A673 (cell line): ENCODE measurements at regions of chr2 and their contacts with region 1.

Region 1: DNA sequence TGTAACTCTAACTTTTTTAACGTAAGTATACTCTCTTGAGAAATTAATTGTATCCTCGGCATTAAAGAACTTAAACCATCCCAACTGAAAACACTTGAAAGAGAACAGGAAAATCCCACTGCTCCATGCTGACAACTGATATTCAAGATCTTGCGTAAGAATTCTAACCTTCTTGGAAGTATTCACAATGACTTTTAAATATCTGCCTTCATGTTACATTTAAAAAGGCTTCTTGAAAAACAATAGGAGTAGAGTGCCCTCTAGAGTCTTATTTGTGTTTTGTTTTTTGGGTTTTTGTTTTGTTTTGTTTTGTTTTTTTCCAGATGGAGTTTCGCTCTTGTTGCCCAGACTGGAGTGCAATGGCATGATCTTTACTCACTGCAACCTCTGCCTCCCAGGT is 65.4 kb upstream of the DNAJC10 start:
- DNase-seq: peak; percentile 85
- H3K4me3 ChIP-seq: no peak overlapping the region
- H3K27ac ChIP-seq: no peak overlapping the region
- H3K4me1 ChIP-seq: peaks cover 17% of the 10 kb centered on the region
- H3K27me3 ChIP-seq: no peaks in the 10 kb centered on the region
- CTCF ChIP-seq: peak; percentile 60

Region 2: DNA sequence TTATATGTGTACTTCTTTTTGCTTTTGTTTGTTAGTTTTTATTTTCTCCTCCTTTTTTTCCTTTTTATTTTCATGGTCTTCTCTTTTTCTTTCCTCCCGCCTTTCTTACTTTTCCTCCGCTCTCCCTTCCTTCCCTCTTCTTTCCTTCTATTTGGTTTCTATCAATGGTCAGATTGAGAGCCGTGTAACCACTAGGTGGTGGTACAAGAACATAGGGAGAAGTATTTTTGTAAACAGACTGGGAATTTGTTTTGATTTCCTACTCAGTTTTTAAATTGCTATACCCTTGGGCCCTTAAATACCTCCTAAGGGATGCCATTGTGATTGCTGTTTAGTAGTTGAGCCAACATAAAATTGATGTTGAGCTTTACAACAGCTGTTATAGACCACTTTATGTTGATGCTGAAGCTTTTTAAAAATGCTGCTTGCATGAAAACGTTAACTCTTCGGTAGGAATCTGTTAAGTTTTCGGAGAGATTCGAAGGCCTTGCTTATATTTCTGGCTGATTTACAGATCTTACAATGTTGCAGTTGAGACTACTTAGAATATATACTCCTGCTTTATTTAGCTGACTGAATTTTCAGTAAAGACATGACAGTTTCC is 1546.1 kb before region 1 on chr2:
- CTCF ChIA-PET with region 1: no interaction called
- POLR2A ChIA-PET with region 1: no interaction called
- intact Hi-C with region 1: loop called (anchors 10 kb)
- DNase-seq: peak; percentile 73
- H3K4me3 ChIP-seq: no peak overlapping the region
- H3K27ac ChIP-seq: no peak overlapping the region
- H3K4me1 ChIP-seq: peaks cover 8% of the 10 kb centered on the region
- H3K27me3 ChIP-seq: no peaks in the 10 kb centered on the region
- CTCF ChIP-seq: peak; percentile 79

Region 3: GRCh38 chr2:181738074-181738473 is 912.6 kb before region 1 on chr2:
- CTCF ChIA-PET with region 1: no interaction called
- POLR2A ChIA-PET with region 1: no interaction called
- intact Hi-C with region 1: loop called (anchors 5 kb)
- DNase-seq: peak; percentile 54
- H3K4me3 ChIP-seq: no peak overlapping the region
- H3K27ac ChIP-seq: no peak overlapping the region
- H3K4me1 ChIP-seq: peaks cover 2% of the 10 kb centered on the region
- H3K27me3 ChIP-seq: no peaks in the 10 kb centered on the region
- CTCF ChIP-seq: peak; percentile 51

Region 4: DNA sequence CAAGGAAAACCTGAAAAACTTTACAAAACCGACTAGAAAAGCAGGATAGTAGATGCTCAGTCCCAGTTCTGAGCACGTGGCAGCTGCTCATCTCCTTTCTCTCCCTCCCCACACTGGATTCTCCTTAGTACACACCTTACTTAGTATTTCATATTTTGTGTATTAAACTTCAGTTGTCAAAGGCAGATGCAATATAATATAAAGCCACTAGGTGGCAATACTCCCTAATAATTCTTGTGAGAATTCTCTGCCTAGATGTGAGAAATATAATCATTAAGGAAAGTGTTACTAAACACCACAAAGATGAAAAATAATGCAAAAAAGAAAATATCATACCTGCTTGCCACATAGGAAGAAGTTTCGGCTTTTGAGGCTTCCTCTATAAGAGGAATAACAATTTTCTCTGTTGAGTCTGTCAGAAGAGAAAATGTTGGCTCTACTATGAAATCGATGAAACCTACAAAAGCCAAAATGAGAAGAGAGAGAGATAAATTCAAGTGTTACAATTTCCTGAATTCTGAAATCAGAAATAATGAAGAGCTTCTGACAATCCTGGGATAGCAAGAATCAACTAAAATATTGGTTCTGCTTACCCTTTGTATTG is 464.5 kb before region 1 on chr2:
- CTCF ChIA-PET with region 1: interaction called, 25 read pairs
- POLR2A ChIA-PET with region 1: no interaction called
- intact Hi-C with region 1: loop called (anchors 1 kb)
- DNase-seq: peak; percentile 80
- H3K4me3 ChIP-seq: no peak overlapping the region
- H3K27ac ChIP-seq: peak overlapping the region; percentile 40
- H3K4me1 ChIP-seq: peaks cover 23% of the 10 kb centered on the region
- H3K27me3 ChIP-seq: no peaks in the 10 kb centered on the region
- CTCF ChIP-seq: peak; percentile 84

Region 5: DNA sequence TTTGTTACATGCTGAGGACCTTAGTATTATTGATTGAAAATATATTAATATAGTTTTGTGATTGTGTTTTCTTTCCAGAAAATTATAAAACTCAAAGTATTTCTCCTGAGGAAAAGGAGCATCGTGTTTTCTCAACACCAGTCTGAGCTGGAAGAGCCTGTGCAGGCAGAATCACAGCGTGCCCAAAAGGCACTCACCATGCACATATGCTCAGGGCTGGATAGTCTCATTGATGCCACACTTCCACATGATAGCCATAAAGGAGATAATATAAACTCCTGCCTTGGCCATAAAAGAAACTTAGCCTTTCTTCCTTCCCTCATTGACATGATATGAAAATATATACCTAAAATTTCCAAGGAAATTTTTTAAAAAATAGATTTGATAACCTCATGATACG is 227.8 kb before region 1 on chr2:
- CTCF ChIA-PET with region 1: no interaction called
- POLR2A ChIA-PET with region 1: no interaction called
- intact Hi-C with region 1: no loop called
- DNase-seq: no peak
- H3K4me3 ChIP-seq: no peak overlapping the region
- H3K27ac ChIP-seq: no peak overlapping the region
- H3K4me1 ChIP-seq: peaks cover 8% of the 10 kb centered on the region
- H3K27me3 ChIP-seq: no peaks in the 10 kb centered on the region
- CTCF ChIP-seq: no peak

Region 6: DNA sequence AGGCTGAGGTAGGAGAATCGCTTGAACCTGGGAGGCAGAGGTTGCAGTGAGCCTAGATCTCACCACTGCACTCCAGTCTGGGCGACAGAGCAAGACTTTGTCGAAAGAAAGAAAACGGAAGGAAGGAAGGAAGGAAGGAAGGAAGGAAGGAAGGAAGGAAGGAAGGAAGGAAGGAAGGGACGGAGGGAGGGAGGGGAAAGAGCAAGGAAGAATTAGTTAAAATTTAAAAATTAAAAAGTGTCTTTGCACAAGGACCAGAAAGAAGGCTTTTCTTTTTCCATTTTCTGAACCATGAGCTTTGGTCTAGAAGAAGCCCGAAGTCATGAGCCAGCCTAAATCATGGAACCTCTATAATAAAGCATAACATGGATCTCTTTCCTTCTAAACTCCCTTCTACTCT is 72.9 kb before region 1 on chr2:
- CTCF ChIA-PET with region 1: interaction called, 23 read pairs
- POLR2A ChIA-PET with region 1: no interaction called
- intact Hi-C with region 1: loop called (anchors 1 kb)
- DNase-seq: peak; percentile 83
- H3K4me3 ChIP-seq: no peak overlapping the region
- H3K27ac ChIP-seq: peak overlapping the region; percentile 89
- H3K4me1 ChIP-seq: peaks cover 26% of the 10 kb centered on the region
- H3K27me3 ChIP-seq: no peaks in the 10 kb centered on the region
- CTCF ChIP-seq: no peak

Region 7: GRCh38 chr2:182980115-182980514 is 329.4 kb after region 1 on chr2:
- CTCF ChIA-PET with region 1: no interaction called
- POLR2A ChIA-PET with region 1: no interaction called
- intact Hi-C with region 1: loop called (anchors 5 kb)
- DNase-seq: peak; percentile 81
- H3K4me3 ChIP-seq: no peak overlapping the region
- H3K27ac ChIP-seq: no peak overlapping the region
- H3K4me1 ChIP-seq: peaks cover 26% of the 10 kb centered on the region
- H3K27me3 ChIP-seq: no peaks in the 10 kb centered on the region
- CTCF ChIP-seq: peak; percentile 69